Ovary (tissue), 10 donors: ENCODE measurements at regions of chr6 and their contacts with region 1.

Region 1: GRCh38 chr6:82085701-82086100 is 161.8 kb downstream of the IBTK start:
- DNase-seq: no peak
- H3K4me3 ChIP-seq: no peak overlapping the region
- H3K27ac ChIP-seq: no peak overlapping the region
- H3K4me1 ChIP-seq: no peaks in the 10 kb centered on the region
- H3K27me3 ChIP-seq: no peaks in the 10 kb centered on the region
- CTCF ChIP-seq: no peak
- EP300 ChIP-seq: no peak
- POLR2A ChIP-seq: no peak

Region 2: GRCh38 chr6:81838006-81838405 is 247.7 kb before region 1 on chr6:
- intact Hi-C with region 1: no loop called
- DNase-seq: no peak
- H3K4me3 ChIP-seq: no peak overlapping the region
- H3K27ac ChIP-seq: no peak overlapping the region
- H3K4me1 ChIP-seq: no peaks in the 10 kb centered on the region
- H3K27me3 ChIP-seq: no peaks in the 10 kb centered on the region
- CTCF ChIP-seq: no peak
- EP300 ChIP-seq: no peak
- POLR2A ChIP-seq: no peak

Region 3: GRCh38 chr6:82145926-82146452 is 60.3 kb after region 1 on chr6:
- intact Hi-C with region 1: loop called in 1 of 4 experiments (anchors 2 kb)
- DNase-seq: no peak
- H3K4me3 ChIP-seq: no peak overlapping the region
- H3K27ac ChIP-seq: no peak overlapping the region
- H3K4me1 ChIP-seq: peaks cover 4% of the 10 kb centered on the region
- H3K27me3 ChIP-seq: no peaks in the 10 kb centered on the region
- CTCF ChIP-seq: no peak
- EP300 ChIP-seq: no peak
- POLR2A ChIP-seq: no peak

Region 4: DNA sequence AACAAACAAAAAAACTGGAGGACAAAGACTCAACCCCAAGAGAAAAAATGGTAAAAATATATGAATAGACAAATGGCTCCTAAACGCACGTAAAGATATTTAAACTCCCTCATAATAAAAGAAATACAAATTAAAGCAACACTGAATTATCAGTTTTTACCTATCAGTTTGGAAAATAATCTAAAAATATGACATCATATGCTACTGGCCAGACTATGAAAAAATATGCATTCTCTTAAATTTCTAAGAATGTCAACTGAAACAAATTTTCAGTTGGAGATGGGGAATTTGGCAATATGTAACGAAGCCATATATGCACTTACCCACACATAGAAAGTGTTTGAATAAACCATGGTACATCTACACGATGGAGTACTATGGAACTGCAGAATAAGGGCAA is 455.6 kb after region 1 on chr6:
- intact Hi-C with region 1: no loop called
- DNase-seq: no peak
- H3K4me3 ChIP-seq: no peak overlapping the region
- H3K27ac ChIP-seq: no peak overlapping the region
- H3K4me1 ChIP-seq: no peaks in the 10 kb centered on the region
- H3K27me3 ChIP-seq: no peaks in the 10 kb centered on the region
- CTCF ChIP-seq: no peak
- EP300 ChIP-seq: no peak
- POLR2A ChIP-seq: no peak

Region 5: DNA sequence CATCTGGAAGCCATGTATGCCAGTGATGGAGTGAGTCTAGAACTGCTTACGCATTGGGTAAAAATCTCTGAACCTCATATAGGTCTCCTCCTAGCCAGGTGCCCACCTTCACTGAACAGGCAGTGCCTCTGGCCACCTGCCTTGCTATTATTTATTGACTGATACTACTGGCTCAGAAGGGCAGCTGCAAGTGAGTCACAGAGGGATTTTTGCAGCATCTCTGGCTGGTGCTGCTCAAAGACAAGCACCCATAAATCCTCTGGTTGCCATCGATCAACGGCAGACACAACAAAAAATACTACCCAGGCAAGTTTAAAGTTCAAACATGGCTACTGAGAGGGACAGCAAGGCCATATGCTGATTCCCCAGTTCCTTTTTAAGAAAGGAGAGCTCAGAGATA is 700.6 kb after region 1 on chr6:
- intact Hi-C with region 1: no loop called
- DNase-seq: no peak
- H3K4me3 ChIP-seq: no peak overlapping the region
- H3K27ac ChIP-seq: no peak overlapping the region
- H3K4me1 ChIP-seq: no peaks in the 10 kb centered on the region
- H3K27me3 ChIP-seq: no peaks in the 10 kb centered on the region
- CTCF ChIP-seq: no peak
- EP300 ChIP-seq: no peak
- POLR2A ChIP-seq: no peak

Region 6: DNA sequence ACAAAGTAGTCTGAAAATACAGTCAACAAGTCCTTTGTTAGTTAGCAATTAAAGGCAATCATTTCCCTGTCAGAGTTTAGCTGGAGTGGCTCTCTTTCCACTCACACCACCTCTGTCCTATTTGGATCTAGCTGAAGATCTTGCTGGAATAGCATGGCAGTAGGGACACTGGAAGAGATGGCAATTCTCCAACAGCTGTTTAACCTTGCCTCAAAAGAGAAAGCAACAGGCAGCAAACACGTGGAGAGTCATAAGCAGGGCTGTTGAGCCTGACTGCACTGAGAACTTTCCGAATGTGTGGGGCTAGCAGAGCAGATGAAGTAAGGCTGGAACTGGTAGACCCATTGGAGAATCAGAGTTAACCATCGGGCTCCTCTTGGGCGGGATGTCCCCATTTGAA is 1388.6 kb after region 1 on chr6:
- intact Hi-C with region 1: no loop called
- DNase-seq: no peak
- H3K4me3 ChIP-seq: no peak overlapping the region
- H3K27ac ChIP-seq: no peak overlapping the region
- H3K4me1 ChIP-seq: no peaks in the 10 kb centered on the region
- H3K27me3 ChIP-seq: no peaks in the 10 kb centered on the region
- CTCF ChIP-seq: no peak
- EP300 ChIP-seq: no peak
- POLR2A ChIP-seq: no peak